ENCODE measurements at regions of chr11 and their contacts with region 1.

Region 1: GRCh38 chr11:93197380-93198214 is at the start of gene SLC36A4:
- DNase-seq: peak; percentile 86 to 90
- ATAC-seq: peak; percentile 95 to 100 (median 97)
- H3K4me3 ChIP-seq: peak within 1 kb of the TSS; percentile 76 to 88 (median 80)
- H3K27ac ChIP-seq: peak within 1 kb of the TSS; percentile 88 to 99 (median 91)
- H3K4me1 ChIP-seq: peaks cover 0 to 49% (median 0%) of the 10 kb centered on the region in 9 donors
- H3K27me3 ChIP-seq: no peaks in the 10 kb centered on the region
- CTCF ChIP-seq: no peak
- total RNA-seq, gene SLC36A4: 3.1 to 11.4 (median 7.1) TPM

Region 2: DNA sequence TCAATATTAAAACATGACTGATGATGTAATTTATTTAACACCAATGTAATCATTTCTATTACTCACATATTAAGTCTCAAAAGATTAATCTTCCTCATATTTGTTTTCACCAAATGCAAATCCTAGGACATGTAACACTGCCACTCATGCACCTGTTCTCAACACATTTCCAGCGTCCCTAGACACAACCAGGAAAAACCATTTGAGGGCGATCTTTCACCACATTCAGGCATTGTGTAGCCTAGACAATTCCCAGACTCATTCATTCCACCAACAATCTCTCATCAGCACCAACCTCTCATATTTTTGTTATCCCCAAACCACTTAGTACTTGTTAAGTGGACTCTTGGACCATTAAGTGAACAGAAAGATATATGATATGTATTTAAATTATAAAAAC is 65.9 kb before region 1 on chr11:
- intact Hi-C with region 1: loop called in 1 of 10 experiments (anchors 10 kb)
- DNase-seq: no peak
- ATAC-seq: no peak
- H3K4me3 ChIP-seq: no peak overlapping the region
- H3K27ac ChIP-seq: no peak overlapping the region
- H3K4me1 ChIP-seq: no peaks in the 10 kb centered on the region
- H3K27me3 ChIP-seq: peaks cover 0 to 16% (median 8%) of the 10 kb centered on the region in 7 donors
- CTCF ChIP-seq: peak in 1 of 9 donors; percentile 14